ENCODE measurements at regions of chr14 and their contacts with region 1.

Region 1: GRCh38 chr14:101707068-101707842 is 54.3 kb upstream of the PPP2R5C start:
- DNase-seq: peak in 9 of 10 donors; percentile 51 to 87 (median 74)
- ATAC-seq: peak; percentile 44 to 59
- H3K4me3 Mint-ChIP-seq: peak overlapping the region; percentile 40 to 79 (median 64)
- H3K27ac Mint-ChIP-seq: peak overlapping the region; percentile 76 to 95 (median 89)
- H3K4me1 Mint-ChIP-seq: peaks cover 8 to 44% (median 34%) of the 10 kb centered on the region in 4 donors
- H3K27me3 Mint-ChIP-seq: peaks cover 0 to 4% (median 0%) of the 10 kb centered on the region in 5 donors

Region 2: DNA sequence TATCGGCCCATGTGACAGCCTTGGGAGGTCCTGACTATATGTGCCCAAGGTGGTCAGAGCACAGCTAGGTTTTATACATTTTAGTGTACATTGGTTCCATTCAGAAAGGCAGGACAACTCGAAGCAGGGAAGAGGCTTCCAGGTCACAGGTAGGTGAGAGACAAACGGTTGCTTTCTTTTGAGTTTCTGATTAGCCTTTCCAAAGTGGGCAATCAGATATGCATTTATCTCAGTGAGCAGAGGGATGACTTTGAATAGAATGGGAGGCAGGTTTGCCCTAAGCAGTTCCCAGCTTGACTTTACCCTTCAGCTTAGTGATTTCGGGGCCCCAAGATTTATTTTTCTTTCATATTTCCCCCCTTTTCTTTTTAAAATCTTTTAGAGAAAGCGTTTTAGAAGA is 33.4 kb before region 1 on chr14:
- POLR2A ChIA-PET with region 1: no interaction called
- DNase-seq: no peak
- ATAC-seq: no peak
- H3K4me3 Mint-ChIP-seq: no peak overlapping the region
- H3K27ac Mint-ChIP-seq: no peak overlapping the region
- H3K4me1 Mint-ChIP-seq: no peaks in the 10 kb centered on the region
- H3K27me3 Mint-ChIP-seq: peaks cover 4 to 27% (median 7%) of the 10 kb centered on the region in 5 donors

Region 3: GRCh38 chr14:101721951-101722661 is 14.9 kb after region 1 on chr14:
- POLR2A ChIA-PET with region 1: interaction called, 35 read pairs
- DNase-seq: peak; percentile 46 to 90 (median 84)
- ATAC-seq: peak; percentile 81 to 83
- H3K4me3 Mint-ChIP-seq: peak overlapping the region; percentile 72 to 89 (median 78)
- H3K27ac Mint-ChIP-seq: peak overlapping the region; percentile 89 to 99 (median 98)
- H3K4me1 Mint-ChIP-seq: peaks cover 19 to 64% (median 45%) of the 10 kb centered on the region in 4 donors
- H3K27me3 Mint-ChIP-seq: peaks cover 0 to 2% (median 0%) of the 10 kb centered on the region in 5 donors

Region 4: DNA sequence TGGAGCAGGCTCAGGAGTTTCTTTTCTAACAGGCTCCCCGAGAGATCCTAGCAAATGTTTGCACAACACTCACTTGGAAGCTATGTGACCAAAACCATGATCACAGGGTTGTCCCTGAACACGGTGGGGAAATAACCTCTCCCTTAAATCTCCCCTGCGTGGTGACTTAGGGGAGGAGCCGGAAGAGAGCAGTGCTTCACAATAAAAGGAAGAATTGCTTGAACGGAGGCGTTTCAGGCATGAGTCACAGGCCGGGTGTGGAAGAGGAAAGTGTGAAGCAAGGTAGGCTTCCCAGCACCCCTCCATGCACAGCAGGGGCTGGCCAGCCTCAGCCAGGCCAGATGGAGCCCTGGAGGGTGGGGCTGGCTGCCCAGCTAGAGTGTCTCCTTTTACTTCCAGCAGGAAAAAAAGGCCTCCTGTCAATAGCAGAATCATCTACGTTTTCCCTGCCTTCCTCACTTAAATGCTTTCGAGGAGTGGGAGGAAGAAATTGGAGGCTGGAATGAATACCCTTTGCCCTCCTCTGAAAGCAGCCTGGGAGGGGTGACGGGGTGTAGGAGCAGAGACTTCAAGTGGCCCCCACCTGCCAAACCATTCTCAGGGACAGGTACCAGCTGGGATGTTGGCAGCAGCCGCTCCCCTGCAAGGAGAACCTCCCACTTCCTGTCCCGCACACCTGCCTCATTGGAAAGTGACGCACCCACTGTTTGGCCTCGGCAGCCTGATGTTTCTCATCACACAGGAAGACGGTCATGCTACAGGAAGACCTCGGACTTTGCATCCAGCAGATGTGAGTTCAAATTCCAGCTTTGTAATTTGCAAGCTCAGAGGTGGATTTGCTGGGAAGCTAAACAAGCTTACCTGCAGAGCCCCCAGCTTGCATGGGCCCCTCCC is 24.2 kb after region 1 on chr14:
- POLR2A ChIA-PET with region 1: interaction called, 20 read pairs
- DNase-seq: peak; percentile 45 to 85 (median 72)
- ATAC-seq: peak; percentile 93 to 95
- H3K4me3 Mint-ChIP-seq: peak overlapping the region; percentile 65 to 89 (median 81)
- H3K27ac Mint-ChIP-seq: peak overlapping the region; percentile 57 to 98 (median 96)
- H3K4me1 Mint-ChIP-seq: peaks cover 18 to 59% (median 41%) of the 10 kb centered on the region in 4 donors
- H3K27me3 Mint-ChIP-seq: peaks cover 0 to 3% (median 0%) of the 10 kb centered on the region in 5 donors

Region 5: GRCh38 chr14:101761032-101761880 is 54.0 kb after region 1 on chr14 and contains the start of gene PPP2R5C:
- POLR2A ChIA-PET with region 1: interaction called, 19 read pairs
- DNase-seq: peak; percentile 80 to 94 (median 89)
- ATAC-seq: peak; percentile 71 to 73
- H3K4me3 Mint-ChIP-seq: peak within 1 kb of the TSS; percentile 87 to 98 (median 93)
- H3K27ac Mint-ChIP-seq: peak within 1 kb of the TSS; percentile 43 to 96 (median 92)
- H3K4me1 Mint-ChIP-seq: peaks cover 14 to 36% (median 26%) of the 10 kb centered on the region in 4 donors
- H3K27me3 Mint-ChIP-seq: no peaks in the 10 kb centered on the region
- polyA plus RNA-seq, gene PPP2R5C: 143 to 237 (median 172) TPM

Region 6: GRCh38 chr14:101772817-101773216 is 65.6 kb after region 1 on chr14:
- POLR2A ChIA-PET with region 1: interaction called, 23 read pairs
- DNase-seq: no peak
- ATAC-seq: no peak
- H3K4me3 Mint-ChIP-seq: no peak overlapping the region
- H3K27ac Mint-ChIP-seq: peak overlapping the region in 1 of 10 donors; percentile 36
- H3K4me1 Mint-ChIP-seq: peaks cover 12 to 54% (median 30%) of the 10 kb centered on the region in 4 donors
- H3K27me3 Mint-ChIP-seq: no peaks in the 10 kb centered on the region

Region 7: DNA sequence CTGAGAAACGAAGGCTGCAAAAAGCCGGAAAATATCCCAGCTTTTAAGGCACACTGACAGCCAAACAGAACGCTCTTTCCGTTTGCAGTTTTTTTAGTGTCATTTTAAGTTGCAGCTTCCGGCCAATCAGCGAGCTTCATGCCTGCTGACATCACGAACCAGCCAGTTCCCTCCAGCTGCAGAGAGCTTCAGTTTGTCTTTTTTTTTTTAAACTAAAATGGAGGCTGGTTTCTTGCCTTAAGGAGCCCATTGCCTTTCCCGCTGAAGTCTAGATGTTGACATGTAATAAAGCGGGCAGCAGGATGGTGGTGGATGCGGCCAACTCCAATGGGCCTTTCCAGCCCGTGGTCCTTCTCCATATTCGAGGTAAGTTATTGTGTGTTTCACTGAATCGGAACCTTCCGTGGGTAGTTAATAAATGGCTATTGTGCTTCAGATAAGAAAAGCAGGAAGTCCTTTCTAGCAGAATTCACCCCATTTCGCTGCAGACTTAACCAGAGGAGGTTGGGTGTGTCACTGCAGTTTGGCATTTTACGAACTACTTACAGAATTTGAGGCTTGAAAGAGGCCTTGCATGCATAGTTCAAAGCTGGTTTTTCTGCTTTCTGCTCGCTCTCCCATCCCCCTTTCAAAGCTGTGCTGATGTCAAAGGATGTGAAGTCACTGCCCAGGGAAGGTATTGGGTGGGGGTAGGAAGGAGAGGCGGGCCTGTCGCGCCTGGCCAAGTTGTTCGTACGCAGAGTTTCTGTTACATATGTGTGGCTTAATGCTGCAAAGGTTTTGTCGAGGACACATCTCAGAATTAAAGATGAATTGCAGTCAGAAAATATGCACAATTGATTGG is 102.6 kb after region 1 on chr14:
- POLR2A ChIA-PET with region 1: interaction called, 21 read pairs
- DNase-seq: peak; percentile 64 to 96 (median 90)
- ATAC-seq: peak; percentile 84 to 89
- H3K4me3 Mint-ChIP-seq: peak overlapping the region; percentile 93 to 98 (median 96)
- H3K27ac Mint-ChIP-seq: peak overlapping the region; percentile 97 to 100 (median 99)
- H3K4me1 Mint-ChIP-seq: peaks cover 23 to 55% (median 46%) of the 10 kb centered on the region in 4 donors
- H3K27me3 Mint-ChIP-seq: no peaks in the 10 kb centered on the region

Region 8: GRCh38 chr14:101947906-101948665 is 240.8 kb after region 1 on chr14:
- POLR2A ChIA-PET with region 1: interaction called, 12 read pairs
- DNase-seq: peak; percentile 96 to 100 (median 100)
- ATAC-seq: peak; percentile 95 to 97
- H3K4me3 Mint-ChIP-seq: peak overlapping the region; percentile 91 to 100 (median 96)
- H3K27ac Mint-ChIP-seq: peak overlapping the region; percentile 97 to 100 (median 100)
- H3K4me1 Mint-ChIP-seq: peaks cover 17 to 37% (median 30%) of the 10 kb centered on the region in 4 donors
- H3K27me3 Mint-ChIP-seq: peaks cover 10 to 37% (median 29%) of the 10 kb centered on the region in 5 donors

Measured in naive thymus-derived CD8-positive, alpha-beta T cell (primary cell).